ENCODE measurements at regions of chr1 and their contacts with region 1.

Region 1: DNA sequence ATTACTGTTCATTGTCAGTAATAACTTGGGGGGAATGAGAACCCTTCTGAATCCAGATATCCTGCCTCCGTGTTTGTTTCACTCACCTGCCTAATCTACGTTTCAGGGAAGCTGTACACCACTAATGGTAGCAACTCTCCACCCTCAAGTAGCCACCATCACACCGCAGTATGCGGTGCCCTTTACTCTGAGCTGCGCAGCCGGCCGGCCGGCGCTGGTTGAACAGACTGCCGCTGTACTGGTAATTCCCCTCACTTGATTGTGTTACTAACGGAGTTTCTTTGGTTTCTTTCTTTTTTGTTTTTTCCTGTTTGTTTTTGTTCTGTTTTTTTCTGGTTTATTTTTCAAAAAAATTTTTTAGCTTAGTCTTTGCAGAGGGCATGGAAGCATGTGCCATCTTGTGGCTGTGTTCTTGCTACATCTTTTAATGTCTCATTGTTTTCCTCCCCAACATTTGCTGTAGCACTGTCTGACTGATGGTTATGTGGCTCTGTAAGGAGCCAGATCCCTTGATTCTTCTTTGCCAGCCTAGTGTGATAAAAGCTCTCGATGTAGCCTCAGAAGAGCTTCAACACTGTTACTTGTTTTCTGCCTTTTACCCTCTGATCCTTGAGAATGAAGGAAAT is 15.9 kb upstream of the OLFML3 start:
- DNase-seq: no peak
- H3K4me3 ChIP-seq: no peak overlapping the region
- H3K27ac ChIP-seq: no peak overlapping the region
- H3K4me1 ChIP-seq: no peaks in the 10 kb centered on the region
- H3K27me3 ChIP-seq: no peaks in the 10 kb centered on the region
- CTCF ChIP-seq: no peak

Region 2: DNA sequence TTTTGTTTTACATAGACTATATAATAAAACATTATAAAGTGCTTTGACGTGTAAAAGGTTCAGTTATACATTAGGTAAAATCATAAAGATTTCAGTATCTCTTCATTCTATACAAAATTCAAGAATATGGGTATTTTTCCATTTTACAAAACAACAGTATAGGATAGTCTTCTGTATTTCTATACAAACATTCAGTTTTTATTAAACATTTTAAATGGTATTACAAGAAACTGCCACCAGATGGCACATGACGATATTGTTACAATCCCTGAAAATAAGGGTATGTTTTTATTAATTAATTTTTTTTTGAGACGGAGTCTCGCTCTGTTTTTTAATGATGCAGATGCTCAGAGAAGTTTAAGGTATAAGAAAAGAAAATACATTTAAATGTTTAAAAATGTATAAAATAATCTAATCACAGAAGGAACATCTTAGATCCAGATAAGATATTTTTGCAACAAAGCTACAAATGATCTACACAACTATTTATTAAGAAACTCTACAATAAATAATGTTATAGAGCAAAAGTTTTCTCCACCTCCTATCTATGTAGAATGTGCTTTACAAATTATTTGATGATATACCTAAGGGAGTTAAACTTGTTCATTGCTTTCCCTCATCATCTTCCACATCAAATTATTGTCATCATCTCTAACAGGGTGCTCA is 127.6 kb before region 1 on chr1:
- intact Hi-C with region 1: loop called (anchors 10 kb)
- DNase-seq: no peak
- H3K4me3 ChIP-seq: no peak overlapping the region
- H3K27ac ChIP-seq: no peak overlapping the region
- H3K4me1 ChIP-seq: no peaks in the 10 kb centered on the region
- H3K27me3 ChIP-seq: no peaks in the 10 kb centered on the region
- CTCF ChIP-seq: peak; percentile 52

Region 3: GRCh38 chr1:113887402-113888175 is 75.8 kb before region 1 on chr1 and contains the start of gene BCL2L15:
- intact Hi-C with region 1: no loop called
- DNase-seq: peak; percentile 62
- H3K4me3 ChIP-seq: peak within 1 kb of the TSS; percentile 36
- H3K27ac ChIP-seq: peak within 1 kb of the TSS; percentile 81
- H3K4me1 ChIP-seq: no peaks in the 10 kb centered on the region
- H3K27me3 ChIP-seq: no peaks in the 10 kb centered on the region
- CTCF ChIP-seq: no peak
- total RNA-seq, gene BCL2L15: 116 to 191 TPM

Region 4: GRCh38 chr1:113904674-113905434 is 58.5 kb before region 1 on chr1 and contains the starts of genes AP4B1 and DCLRE1B:
- intact Hi-C with region 1: no loop called
- DNase-seq: peak; percentile 99
- H3K4me3 ChIP-seq: peak within 1 kb of the TSS; percentile 58
- H3K27ac ChIP-seq: peak within 1 kb of the TSS; percentile 93
- H3K4me1 ChIP-seq: peaks cover 10% of the 10 kb centered on the region
- H3K27me3 ChIP-seq: no peaks in the 10 kb centered on the region
- CTCF ChIP-seq: peak; percentile 42
- total RNA-seq, gene AP4B1: 19.7 to 31.5 TPM
- total RNA-seq, gene DCLRE1B: 5.4 to 9.5 TPM

Measured in colonic mucosa (tissue), 4 donors.